Left ventricle myocardium superior (tissue), 1 donor: ENCODE measurements at regions of chr9 and their contacts with region 1.

Region 1: GRCh38 chr9:113657703-113658544 is 194.4 kb downstream of the RGS3 start:
- DNase-seq: peak; percentile 88
- ATAC-seq: peak; percentile 73

Region 2: DNA sequence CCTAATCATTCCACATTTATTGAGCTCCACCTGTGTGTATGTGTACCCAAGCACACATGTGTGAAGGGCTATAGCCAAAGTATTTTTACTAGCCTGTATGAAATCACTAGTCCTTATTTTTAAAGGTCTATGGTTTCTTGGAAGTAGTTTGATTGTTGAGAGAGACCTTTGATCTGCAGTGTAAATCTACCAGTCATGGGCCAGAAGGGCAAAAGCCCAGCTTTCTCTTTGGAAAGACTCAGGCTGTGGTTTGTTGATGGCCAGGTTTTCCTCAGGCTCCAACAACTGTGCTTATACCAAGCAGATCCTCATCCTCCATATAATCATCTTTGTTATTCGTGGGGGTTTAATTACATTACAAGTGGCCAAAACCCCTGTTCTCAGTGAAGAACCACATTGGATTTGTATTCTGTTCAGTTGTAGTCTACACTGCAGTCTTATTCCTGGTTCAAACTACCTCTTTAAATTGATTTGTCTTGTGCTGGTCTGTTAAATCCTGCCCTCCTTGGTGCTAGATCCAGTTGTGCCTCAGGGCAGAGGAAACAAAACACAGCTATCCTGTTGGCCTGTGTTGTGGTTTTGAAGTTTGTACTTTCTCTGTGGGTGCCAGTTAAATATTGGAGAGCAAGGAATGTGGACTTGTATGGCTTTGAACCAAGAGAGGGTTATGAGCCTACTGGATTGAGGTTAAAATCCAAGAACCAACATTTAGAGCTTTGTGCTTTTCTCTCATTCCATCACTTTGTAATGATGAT is 395.8 kb before region 1 on chr9:
- intact Hi-C with region 1: no loop called
- DNase-seq: no peak
- ATAC-seq: no peak

Region 3: DNA sequence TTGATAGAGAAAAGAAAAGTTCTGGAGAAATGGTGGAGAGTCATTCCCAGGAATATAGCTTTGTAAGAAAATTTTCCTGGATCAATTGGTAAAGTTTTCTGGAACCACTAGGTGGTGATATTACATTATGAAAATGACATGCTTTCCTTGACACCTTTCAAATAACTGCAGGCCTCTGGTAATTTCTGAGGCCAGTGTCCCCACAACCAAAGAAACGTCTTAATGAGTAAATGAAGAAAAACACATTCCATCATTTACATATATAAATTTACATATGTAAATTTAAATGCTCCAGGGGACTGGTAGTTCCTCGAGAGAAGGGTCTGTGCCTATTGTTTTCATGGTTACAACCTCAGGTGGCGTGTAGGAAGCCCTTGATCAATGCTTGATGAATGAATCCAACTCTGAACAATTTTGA is 211.6 kb before region 1 on chr9:
- intact Hi-C with region 1: loop called (anchors 2 kb)
- DNase-seq: no peak
- ATAC-seq: peak; percentile 68

Region 4: DNA sequence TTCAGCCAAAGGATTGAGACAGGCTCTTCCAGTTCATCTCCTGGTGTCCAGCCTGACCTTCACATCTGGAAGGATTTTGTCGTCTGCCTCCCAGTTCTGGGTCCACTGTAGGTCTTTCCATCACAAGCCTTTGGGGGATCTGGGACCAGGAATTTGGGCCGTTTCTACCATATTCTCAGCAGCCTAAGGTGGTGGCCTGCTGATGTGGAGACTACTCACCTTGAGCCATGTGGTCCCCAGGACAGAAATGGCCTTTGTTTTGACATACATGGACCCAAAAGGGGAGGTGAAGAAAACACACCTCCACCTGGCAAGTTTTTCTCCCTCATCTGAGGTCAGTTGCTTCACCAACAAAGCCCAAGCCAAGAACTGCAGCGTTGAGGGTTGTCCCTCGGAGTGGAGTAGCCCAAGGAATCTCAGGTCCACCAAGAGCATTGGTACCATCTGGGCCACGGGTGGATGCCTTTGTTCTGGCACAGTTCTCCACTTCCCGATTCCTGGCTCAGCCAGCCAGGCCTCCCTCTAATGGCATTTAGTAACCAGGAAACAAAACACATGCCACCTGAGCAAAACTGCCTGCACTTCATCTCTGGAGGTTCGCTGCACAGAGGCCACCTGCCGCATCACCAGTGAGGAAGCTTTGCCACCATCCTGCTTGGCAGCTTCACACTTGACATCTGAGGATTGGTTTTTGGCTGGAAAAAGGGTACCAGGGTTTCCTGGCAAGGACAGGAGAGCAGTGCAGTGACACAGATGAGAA is 395.5 kb after region 1 on chr9:
- intact Hi-C with region 1: no loop called
- DNase-seq: no peak
- ATAC-seq: no peak